Calu3 (cell line): ENCODE measurements at regions of chr7 and their contacts with region 1.

Region 1: DNA sequence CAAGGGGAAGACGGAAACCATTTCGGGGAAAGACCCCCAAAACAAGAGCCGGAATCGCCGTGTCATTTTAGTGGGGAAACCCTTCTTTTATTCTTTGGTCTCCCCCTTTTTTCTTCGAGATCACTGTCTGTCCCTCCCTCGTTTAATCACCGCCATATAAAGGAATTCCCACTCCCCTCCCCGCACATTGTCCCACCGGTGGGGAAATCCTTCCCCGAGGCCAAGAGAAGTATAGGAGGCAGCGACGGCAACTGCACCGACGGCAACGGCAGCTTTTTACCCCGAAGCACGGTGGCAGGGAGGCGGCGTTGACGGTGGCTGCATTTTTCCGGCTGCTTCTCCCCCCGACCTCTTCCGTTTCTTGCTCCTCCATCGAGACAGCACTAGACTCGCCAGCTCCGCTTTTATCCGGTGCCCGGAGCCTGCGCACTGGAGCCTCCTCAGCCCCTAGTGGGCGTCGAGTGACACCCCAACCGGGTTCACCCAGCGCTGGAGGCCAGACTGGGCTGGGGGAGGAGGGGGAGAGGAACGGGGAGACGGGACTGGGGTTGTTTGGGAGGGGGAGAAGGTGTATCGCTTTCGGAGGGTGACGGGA is 687 bp upstream of the KMT2E start:
- DNase-seq: peak; percentile 87
- H3K4me3 Mint-ChIP-seq: peak overlapping the region; percentile 93
- H3K27ac Mint-ChIP-seq: peak overlapping the region; percentile 100
- H3K4me1 Mint-ChIP-seq: peaks cover 11% of the 10 kb centered on the region
- H3K27me3 Mint-ChIP-seq: no peaks in the 10 kb centered on the region
- CTCF ChIP-seq: no peak

Region 2: GRCh38 chr7:104943502-104944343 is 69.6 kb before region 1 on chr7:
- CTCF ChIA-PET with region 1: no interaction called
- intact Hi-C with region 1: loop called (anchors 2 kb)
- DNase-seq: peak; percentile 74
- H3K4me3 Mint-ChIP-seq: peak overlapping the region; percentile 28
- H3K27ac Mint-ChIP-seq: peak overlapping the region; percentile 95
- H3K4me1 Mint-ChIP-seq: peaks cover 25% of the 10 kb centered on the region
- H3K27me3 Mint-ChIP-seq: peaks cover 10% of the 10 kb centered on the region
- CTCF ChIP-seq: no peak

Region 3: DNA sequence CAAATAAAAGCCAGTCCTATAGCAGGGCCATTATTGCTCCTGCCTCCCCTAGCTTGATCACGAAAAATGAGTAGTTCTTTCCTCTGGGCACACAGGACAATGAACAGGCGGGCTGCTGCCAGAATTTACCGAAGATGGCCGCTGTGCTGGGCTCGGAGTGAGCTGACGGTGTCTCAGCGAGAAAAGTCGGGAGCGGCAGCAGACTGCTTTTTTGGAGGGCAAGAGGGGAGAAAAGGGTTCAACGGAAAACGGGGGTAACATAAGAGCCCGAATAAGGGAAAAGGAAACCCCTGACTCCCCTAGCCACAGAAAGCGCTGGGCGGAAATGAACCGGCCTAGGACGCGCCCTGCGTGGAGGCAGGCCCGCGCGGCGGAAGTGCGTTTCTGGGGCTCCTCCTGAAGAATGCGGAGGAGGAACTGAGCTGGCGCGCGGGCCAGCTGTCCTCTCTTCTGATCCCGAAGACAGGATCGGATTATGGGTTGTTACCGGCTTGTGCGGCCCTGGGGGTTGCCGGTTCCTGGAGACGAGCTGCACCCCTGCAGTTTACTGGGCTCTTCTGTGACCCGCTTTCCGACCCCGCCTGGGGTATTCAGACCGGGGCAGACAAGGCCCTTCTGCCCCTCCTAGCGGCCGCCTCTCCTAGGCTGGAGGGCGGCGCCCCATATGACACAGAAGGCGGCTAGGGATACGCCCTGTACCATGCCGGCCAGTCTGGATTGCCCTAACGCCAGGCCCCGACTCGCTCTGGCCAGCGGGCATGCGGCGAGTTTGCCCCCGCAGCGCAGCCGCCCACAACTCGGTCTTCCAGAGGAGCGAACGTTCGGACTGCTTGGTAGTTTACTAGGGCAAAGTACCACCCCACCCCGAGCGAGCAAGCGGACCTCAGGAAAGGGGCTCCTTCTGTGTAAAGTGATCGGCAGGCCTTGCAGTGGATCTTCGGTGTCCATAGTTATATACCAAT is 29.5 kb before region 1 on chr7:
- CTCF ChIA-PET with region 1: interaction called, 5 read pairs
- intact Hi-C with region 1: loop called (anchors 1 kb)
- DNase-seq: peak; percentile 75
- H3K4me3 Mint-ChIP-seq: peak overlapping the region; percentile 86
- H3K27ac Mint-ChIP-seq: peak overlapping the region; percentile 98
- H3K4me1 Mint-ChIP-seq: peaks cover 17% of the 10 kb centered on the region
- H3K27me3 Mint-ChIP-seq: no peaks in the 10 kb centered on the region
- CTCF ChIP-seq: no peak

Region 4: DNA sequence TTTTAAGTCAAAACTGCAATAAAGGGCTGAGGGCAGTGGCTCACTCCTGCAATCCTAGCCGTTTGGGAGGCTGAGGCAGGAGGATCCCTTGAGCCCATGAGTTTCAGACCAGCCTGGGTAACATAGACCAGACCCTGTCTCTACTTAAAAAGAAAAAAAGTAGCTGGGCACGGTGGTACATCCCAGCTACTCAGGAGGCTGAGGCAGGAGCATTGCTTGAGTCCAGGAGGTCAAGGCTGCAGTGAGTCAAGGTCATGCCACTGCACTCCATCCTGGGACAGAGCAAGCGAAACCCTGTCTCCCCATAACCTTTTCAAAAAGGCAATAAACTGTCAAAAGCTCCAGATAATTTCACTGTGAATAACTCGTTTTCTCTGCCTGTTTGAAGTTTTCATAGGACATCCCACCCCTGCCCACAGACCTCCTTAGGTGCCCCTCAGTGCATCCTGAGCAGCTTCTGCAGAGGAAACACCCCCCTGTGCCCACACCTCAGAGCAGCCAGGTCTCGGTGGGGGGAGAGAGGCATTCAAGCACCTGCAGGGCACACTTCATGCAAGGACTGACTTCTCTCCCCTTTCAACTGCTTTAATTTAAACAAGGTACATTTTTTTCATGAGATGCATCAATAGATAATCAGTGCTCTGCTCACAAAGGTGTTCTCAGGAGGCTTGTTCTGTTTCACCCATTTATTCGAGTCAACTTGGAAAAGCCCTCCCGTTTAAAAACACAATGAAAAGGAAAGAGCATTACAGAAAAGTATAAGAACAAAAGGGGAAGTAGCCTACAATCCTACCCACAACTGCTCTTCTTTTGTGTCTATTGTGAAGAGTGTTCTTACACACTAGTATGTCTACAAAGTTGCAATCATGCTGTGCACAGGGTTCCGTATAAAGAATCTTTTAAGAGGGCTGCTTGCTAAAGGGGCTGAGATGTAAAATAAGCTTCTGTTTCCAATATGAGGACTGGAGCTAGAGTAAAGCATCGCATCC is 105.6 kb after region 1 on chr7:
- CTCF ChIA-PET with region 1: no interaction called
- intact Hi-C with region 1: no loop called
- DNase-seq: no peak
- H3K4me3 Mint-ChIP-seq: no peak overlapping the region
- H3K27ac Mint-ChIP-seq: no peak overlapping the region
- H3K4me1 Mint-ChIP-seq: no peaks in the 10 kb centered on the region
- H3K27me3 Mint-ChIP-seq: no peaks in the 10 kb centered on the region
- CTCF ChIP-seq: no peak